ENCODE measurements at regions of chr6 and their contacts with region 1.

Region 1: GRCh38 chr6:19538077-19538512 is 299.1 kb upstream of the ID4 start:
- DNase-seq: peak; percentile 100
- H3K4me3 ChIP-seq: no peak overlapping the region
- H3K27ac ChIP-seq: peak overlapping the region; percentile 69
- H3K4me1 ChIP-seq: peaks cover 23% of the 10 kb centered on the region
- H3K27me3 ChIP-seq: no peaks in the 10 kb centered on the region
- CTCF ChIP-seq: no peak

Region 2: DNA sequence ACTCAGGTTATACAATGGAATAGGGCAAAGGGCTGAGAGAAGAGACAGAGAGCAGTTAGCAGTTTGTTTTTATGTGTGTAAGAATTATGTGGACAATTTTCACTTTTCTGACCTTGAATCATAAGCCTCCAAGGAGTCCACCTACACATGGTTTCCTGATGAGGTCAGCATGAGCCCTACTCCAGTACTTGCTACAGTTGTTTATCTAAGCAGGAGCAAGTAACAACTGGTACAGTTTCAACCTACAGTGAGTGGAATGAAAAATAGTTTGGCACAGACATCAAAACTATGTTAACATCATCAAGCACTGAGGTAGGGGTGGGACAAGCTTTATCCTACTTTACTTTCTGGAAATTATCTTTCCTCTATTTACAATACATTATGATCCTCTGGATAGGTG is 127.6 kb before region 1 on chr6:
- CTCF ChIA-PET with region 1: no interaction called
- dilution Hi-C with region 1: no loop called
- in situ Hi-C with region 1: loop called in 1 of 2 experiments (anchors 10 kb)
- intact Hi-C with region 1: no loop called
- DNase-seq: peak; percentile 95
- H3K4me3 ChIP-seq: no peak overlapping the region
- H3K27ac ChIP-seq: peak overlapping the region; percentile 67
- H3K4me1 ChIP-seq: peaks cover 44% of the 10 kb centered on the region
- H3K27me3 ChIP-seq: no peaks in the 10 kb centered on the region
- CTCF ChIP-seq: no peak

Region 3: GRCh38 chr6:19415585-19416326 is 122.3 kb before region 1 on chr6:
- CTCF ChIA-PET with region 1: no interaction called
- dilution Hi-C with region 1: no loop called
- in situ Hi-C with region 1: loop called in 1 of 2 experiments (anchors 10 kb)
- intact Hi-C with region 1: loop called (anchors 2 kb)
- DNase-seq: peak; percentile 82
- H3K4me3 ChIP-seq: no peak overlapping the region
- H3K27ac ChIP-seq: peak overlapping the region; percentile 81
- H3K4me1 ChIP-seq: peaks cover 61% of the 10 kb centered on the region
- H3K27me3 ChIP-seq: no peaks in the 10 kb centered on the region
- CTCF ChIP-seq: no peak

Region 4: GRCh38 chr6:19472847-19473246 is 65.2 kb before region 1 on chr6:
- CTCF ChIA-PET with region 1: no interaction called
- dilution Hi-C with region 1: no loop called
- in situ Hi-C with region 1: no loop called
- intact Hi-C with region 1: loop called (anchors 5 kb)
- DNase-seq: no peak
- H3K4me3 ChIP-seq: no peak overlapping the region
- H3K27ac ChIP-seq: no peak overlapping the region
- H3K4me1 ChIP-seq: peaks cover 3% of the 10 kb centered on the region
- H3K27me3 ChIP-seq: no peaks in the 10 kb centered on the region
- CTCF ChIP-seq: peak; percentile 67 to 68

Region 5: DNA sequence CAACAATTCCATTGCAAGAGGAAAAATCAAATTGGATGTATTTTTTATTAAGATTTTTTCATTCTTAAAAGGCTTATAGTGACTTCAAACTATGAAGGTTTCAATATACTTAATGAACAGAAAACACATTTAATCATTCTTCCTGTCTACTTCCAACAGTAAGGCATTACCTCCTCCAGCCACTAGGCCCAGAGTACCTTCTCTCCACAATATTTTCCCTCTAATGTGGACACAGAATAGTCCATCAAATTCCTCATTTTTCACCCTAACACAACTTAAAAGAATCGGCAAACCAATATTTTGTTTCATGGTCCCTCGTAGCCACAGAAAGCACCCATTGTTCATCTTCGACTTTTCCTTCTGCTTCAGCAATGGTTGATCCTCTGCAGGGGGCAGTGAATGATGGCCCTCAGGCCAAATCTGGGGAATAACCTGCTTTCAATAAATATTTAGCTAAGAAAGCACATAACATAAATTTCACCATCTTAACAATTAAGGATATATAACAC is 36.3 kb before region 1 on chr6:
- CTCF ChIA-PET with region 1: no interaction called
- dilution Hi-C with region 1: no loop called
- in situ Hi-C with region 1: no loop called
- intact Hi-C with region 1: no loop called
- DNase-seq: no peak
- H3K4me3 ChIP-seq: no peak overlapping the region
- H3K27ac ChIP-seq: no peak overlapping the region
- H3K4me1 ChIP-seq: no peaks in the 10 kb centered on the region
- H3K27me3 ChIP-seq: no peaks in the 10 kb centered on the region
- CTCF ChIP-seq: peak in 1 of 2 donors; percentile 7

Region 6: GRCh38 chr6:19613681-19614080 is 75.6 kb after region 1 on chr6:
- CTCF ChIA-PET with region 1: no interaction called
- dilution Hi-C with region 1: no loop called
- in situ Hi-C with region 1: no loop called
- intact Hi-C with region 1: no loop called
- DNase-seq: peak; percentile 17
- H3K4me3 ChIP-seq: no peak overlapping the region
- H3K27ac ChIP-seq: no peak overlapping the region
- H3K4me1 ChIP-seq: no peaks in the 10 kb centered on the region
- H3K27me3 ChIP-seq: no peaks in the 10 kb centered on the region
- CTCF ChIP-seq: peak in 1 of 2 donors; percentile 44